CD8-positive, alpha-beta T cell (primary cell): ENCODE measurements at regions of chr1 and their contacts with region 1.

Region 1: DNA sequence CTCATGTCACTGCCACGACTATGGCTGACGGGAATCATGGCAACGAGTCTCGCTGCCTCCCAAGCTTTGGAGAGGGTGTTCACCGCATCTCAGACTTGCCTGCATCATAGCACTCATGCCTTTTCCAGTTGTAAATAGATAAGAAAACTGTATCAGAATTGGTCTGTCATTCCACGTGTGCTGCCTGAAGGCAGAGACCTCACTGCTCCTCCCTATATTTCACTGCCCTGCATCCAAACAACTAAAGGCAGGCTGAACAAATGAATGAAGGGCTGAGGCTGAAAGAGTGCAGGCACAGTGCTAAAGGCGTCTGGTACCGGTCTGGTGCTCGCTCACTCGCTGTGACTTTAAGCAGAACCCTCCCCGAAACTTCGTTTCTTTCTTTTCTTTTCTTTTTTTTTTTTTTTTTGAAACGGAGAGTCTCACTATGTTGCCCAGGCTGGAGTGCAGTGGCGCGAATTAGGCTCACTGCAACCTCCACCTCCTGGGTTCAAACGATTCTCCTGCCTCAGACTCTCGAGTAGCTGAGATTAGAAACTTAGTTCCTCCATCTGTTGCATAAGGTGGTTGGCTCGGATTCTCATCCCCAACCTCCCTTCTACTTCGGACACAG is 542 bp downstream of the EIF2B3 start:
- DNase-seq: no peak
- ATAC-seq: no peak
- H3K4me3 ChIP-seq: peak overlapping the region; percentile 70 to 85
- H3K4me3 Mint-ChIP-seq: peak overlapping the region; percentile 97
- H3K27ac ChIP-seq: peak overlapping the region; percentile 31 to 42
- H3K27ac Mint-ChIP-seq: peak overlapping the region; percentile 93
- H3K4me1 ChIP-seq: peaks cover 15% of the 10 kb centered on the region
- H3K4me1 Mint-ChIP-seq: peaks cover 30% of the 10 kb centered on the region
- H3K27me3 ChIP-seq: no peaks in the 10 kb centered on the region
- H3K27me3 Mint-ChIP-seq: no peaks in the 10 kb centered on the region
- CTCF ChIP-seq: no peak

Region 2: DNA sequence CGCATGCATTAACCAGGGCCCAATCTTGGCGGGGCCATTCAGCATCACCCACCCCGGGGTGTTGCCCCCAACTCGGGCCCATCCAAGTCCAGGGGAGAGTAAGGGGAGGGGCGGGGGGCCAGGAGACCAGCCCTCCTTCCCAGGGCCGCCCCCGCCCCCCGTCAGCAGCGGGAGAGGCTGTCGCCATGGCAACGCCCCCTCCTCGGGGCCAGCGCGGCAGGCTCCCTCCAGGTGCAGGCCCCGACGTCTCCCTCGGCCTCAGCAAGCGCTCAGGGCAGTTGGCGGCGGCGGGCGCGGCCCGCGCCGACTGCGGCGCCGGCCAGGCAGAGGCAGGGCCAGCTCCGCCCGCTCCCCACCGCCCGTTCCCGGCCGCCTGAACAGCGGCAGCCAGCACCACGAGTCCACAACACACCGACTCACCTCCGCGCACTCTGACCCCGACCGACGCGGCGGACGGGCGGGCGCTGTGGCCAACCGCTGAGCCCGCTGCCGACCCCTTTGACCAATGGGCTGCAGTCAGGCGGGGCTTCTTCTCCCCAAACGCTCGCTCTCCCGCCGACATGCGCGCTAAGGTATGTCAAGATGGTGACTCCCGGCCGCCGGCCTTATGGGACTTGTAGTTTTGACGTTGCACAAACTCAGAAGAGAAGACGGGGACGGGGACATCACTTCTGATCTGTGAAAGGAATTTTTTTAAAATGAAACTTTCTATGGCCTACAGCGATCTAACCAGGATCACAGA is 630.8 kb before region 1 on chr1 and contains the start of gene ERI3:
- CTCF ChIA-PET with region 1: no interaction called
- POLR2A ChIA-PET with region 1: no interaction called
- intact Hi-C with region 1: loop called in 1 of 2 experiments (anchors 2 kb)
- DNase-seq: peak; percentile 91 to 98 (median 96)
- ATAC-seq: peak; percentile 99
- H3K4me3 ChIP-seq: peak within 1 kb of the TSS; percentile 56 to 64
- H3K4me3 Mint-ChIP-seq: peak within 1 kb of the TSS; percentile 95
- H3K27ac ChIP-seq: peak within 1 kb of the TSS; percentile 37 to 60
- H3K27ac Mint-ChIP-seq: peak within 1 kb of the TSS; percentile 93
- H3K4me1 ChIP-seq: peaks cover 20% of the 10 kb centered on the region
- H3K4me1 Mint-ChIP-seq: peaks cover 38% of the 10 kb centered on the region
- H3K27me3 ChIP-seq: no peaks in the 10 kb centered on the region
- H3K27me3 Mint-ChIP-seq: no peaks in the 10 kb centered on the region
- CTCF ChIP-seq: no peak
- total RNA-seq, gene ERI3: 17.3 to 20.0 TPM

Region 3: GRCh38 chr1:44739361-44740178 is 246.3 kb before region 1 on chr1 and contains the start of gene KIF2C:
- CTCF ChIA-PET with region 1: no interaction called
- POLR2A ChIA-PET with region 1: no interaction called
- intact Hi-C with region 1: loop called (anchors 1 to 2 kb)
- DNase-seq: peak; percentile 93 to 98 (median 96)
- ATAC-seq: peak; percentile 100
- H3K4me3 ChIP-seq: peak within 1 kb of the TSS; percentile 81 to 84
- H3K4me3 Mint-ChIP-seq: peak within 1 kb of the TSS; percentile 93
- H3K27ac ChIP-seq: peak within 1 kb of the TSS; percentile 69 to 88
- H3K27ac Mint-ChIP-seq: peak within 1 kb of the TSS; percentile 97
- H3K4me1 ChIP-seq: peaks cover 12% of the 10 kb centered on the region
- H3K4me1 Mint-ChIP-seq: peaks cover 17% of the 10 kb centered on the region
- H3K27me3 ChIP-seq: no peaks in the 10 kb centered on the region
- H3K27me3 Mint-ChIP-seq: no peaks in the 10 kb centered on the region
- CTCF ChIP-seq: no peak
- total RNA-seq, gene KIF2C: 0.58 to 0.81 TPM

Region 4: GRCh38 chr1:45196873-45197272 is 211.0 kb after region 1 on chr1:
- CTCF ChIA-PET with region 1: no interaction called
- POLR2A ChIA-PET with region 1: no interaction called
- intact Hi-C with region 1: no loop called
- DNase-seq: no peak
- ATAC-seq: no peak
- H3K4me3 ChIP-seq: no peak overlapping the region
- H3K4me3 Mint-ChIP-seq: no peak overlapping the region
- H3K27ac ChIP-seq: no peak overlapping the region
- H3K27ac Mint-ChIP-seq: no peak overlapping the region
- H3K4me1 ChIP-seq: no peaks in the 10 kb centered on the region
- H3K4me1 Mint-ChIP-seq: no peaks in the 10 kb centered on the region
- H3K27me3 ChIP-seq: no peaks in the 10 kb centered on the region
- H3K27me3 Mint-ChIP-seq: no peaks in the 10 kb centered on the region
- CTCF ChIP-seq: no peak

Region 5: DNA sequence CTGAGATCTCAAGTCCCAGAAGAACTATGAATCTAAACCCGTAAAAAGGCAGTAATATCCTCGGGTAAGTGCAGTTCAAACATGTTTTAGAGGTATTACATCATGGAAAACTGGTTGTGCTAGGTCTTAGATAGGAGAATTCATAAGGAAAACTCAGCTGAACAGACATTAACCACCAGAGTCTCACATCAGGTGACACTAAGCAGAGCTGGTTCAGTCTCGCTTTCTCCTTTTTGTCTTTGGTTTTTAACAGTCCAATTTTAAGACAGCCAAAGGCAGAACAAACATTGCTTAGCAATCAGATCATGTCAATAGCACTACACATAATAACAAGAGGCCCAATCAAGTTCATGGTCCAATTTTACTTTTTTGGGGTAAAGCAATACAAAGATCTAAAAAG is 417.4 kb after region 1 on chr1:
- CTCF ChIA-PET with region 1: no interaction called
- POLR2A ChIA-PET with region 1: no interaction called
- intact Hi-C with region 1: no loop called
- DNase-seq: no peak
- ATAC-seq: no peak
- H3K4me3 ChIP-seq: no peak overlapping the region
- H3K4me3 Mint-ChIP-seq: no peak overlapping the region
- H3K27ac ChIP-seq: no peak overlapping the region
- H3K27ac Mint-ChIP-seq: no peak overlapping the region
- H3K4me1 ChIP-seq: no peaks in the 10 kb centered on the region
- H3K4me1 Mint-ChIP-seq: no peaks in the 10 kb centered on the region
- H3K27me3 ChIP-seq: no peaks in the 10 kb centered on the region
- H3K27me3 Mint-ChIP-seq: no peaks in the 10 kb centered on the region
- CTCF ChIP-seq: no peak